Ovary (tissue), 10 donors: ENCODE measurements at regions of chr14 and their contacts with region 1.

Region 1: DNA sequence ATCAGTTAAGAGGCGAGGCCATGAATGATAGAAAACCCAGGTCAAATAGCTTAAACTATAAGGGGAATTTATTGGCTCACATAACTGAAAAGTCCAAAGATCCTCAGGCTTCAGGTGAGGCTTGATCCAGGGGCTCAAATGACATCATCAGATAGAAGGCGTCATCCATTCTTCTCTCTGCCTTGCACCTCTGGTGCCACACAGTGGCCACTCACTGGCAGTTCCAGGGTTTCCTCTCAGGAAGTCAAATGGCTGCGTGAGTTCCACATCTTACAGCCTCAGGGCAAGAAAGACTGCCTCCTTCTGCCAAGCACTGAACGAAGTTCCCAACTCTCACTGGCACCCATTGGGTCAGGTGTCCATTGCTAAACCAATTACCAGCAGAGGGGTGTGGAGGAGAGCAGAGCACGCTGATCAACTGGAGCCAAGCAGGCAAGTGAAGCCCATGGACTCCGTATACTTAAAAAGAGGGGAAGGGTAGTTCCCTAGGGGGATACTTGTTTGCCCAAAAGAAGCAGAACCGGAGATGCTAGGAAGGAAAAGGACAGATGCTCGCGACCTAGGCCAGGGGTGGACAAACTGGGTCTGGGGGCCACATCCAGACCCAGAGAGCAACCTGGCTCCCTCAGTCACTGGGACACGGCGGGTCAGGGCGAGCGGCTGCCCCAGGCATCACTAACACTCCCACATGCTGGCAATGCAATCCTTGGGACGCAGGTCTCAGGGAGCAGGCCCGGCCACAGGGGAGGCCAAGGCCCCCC is 69.3 kb downstream of the SERPINA3 start:
- DNase-seq: peak in 1 of 5 donors; percentile 32
- H3K4me3 ChIP-seq: no peak overlapping the region
- H3K27ac ChIP-seq: no peak overlapping the region
- H3K4me1 ChIP-seq: no peaks in the 10 kb centered on the region
- H3K27me3 ChIP-seq: no peaks in the 10 kb centered on the region
- CTCF ChIP-seq: peak in 1 of 3 donors; percentile 15
- EP300 ChIP-seq: no peak
- POLR2A ChIP-seq: no peak

Region 2: GRCh38 chr14:94485944-94486841 is 195.3 kb before region 1 on chr14:
- intact Hi-C with region 1: loop called in 1 of 4 experiments (anchors 5 kb)
- DNase-seq: peak; percentile 46 to 79 (median 65)
- H3K4me3 ChIP-seq: no peak overlapping the region
- H3K27ac ChIP-seq: no peak overlapping the region
- H3K4me1 ChIP-seq: peaks cover 1% of the 10 kb centered on the region
- H3K27me3 ChIP-seq: no peaks in the 10 kb centered on the region
- CTCF ChIP-seq: peak; percentile 80 to 95 (median 83)
- EP300 ChIP-seq: no peak
- POLR2A ChIP-seq: no peak